Activated CD4-positive, alpha-beta T cell treated with anti-CD3 and anti-CD28 coated beads for 36 hours (primary cell): ENCODE measurements at regions of chr1 and their contacts with region 1.

Region 1: GRCh38 chr1:168225476-168226190 is at the start of gene SFT2D2:
- DNase-seq: peak; percentile 88
- ATAC-seq: peak; percentile 90
- H3K4me3 Mint-ChIP-seq: peak within 1 kb of the TSS; percentile 86
- H3K27ac Mint-ChIP-seq: peak within 1 kb of the TSS; percentile 86
- H3K4me1 Mint-ChIP-seq: peaks cover 49% of the 10 kb centered on the region
- H3K27me3 Mint-ChIP-seq: peaks cover 3% of the 10 kb centered on the region
- total RNA-seq, gene SFT2D2: 25.2 to 42.3 TPM

Region 2: DNA sequence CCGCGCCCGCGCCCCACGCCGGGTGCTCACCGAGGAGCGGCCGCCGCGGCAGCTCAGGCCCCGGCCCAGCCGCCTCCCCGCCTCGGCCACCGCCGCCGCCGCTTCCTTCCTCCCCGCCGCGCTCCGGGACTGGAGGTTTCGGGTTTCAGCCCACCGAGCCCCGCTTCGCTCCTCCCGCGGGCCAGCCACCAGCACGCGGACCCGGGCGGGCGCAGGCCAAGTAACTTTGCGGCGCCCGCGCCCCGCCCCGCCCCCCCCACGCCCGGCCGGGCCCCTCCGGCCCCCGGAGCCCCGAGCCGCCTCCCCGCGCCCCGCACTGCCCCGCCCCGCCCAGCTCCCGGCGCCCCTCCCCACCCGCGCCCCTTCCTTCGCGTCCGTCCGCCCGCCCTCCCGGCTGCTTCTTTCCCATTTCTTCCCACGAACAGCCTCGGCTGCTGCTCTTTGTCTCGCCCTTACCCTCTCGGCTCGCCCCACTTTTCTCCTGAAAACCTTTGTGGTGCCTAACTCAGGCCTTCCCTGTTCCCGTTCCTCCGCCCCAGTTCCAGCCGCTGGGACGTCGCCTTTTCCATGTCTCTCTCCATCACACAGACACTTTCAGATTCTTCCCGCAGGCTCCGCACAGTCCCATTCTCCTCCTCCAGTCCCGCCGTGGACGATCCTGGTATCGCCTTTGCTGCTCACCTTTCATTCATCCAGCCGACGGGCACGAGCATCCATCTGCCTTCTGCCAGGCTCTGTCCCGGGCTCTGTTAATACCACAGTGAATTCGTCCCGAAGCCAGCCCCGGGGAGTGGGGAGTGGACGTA is 88.7 kb before region 1 on chr1 and contains the start of gene GPR161:
- CTCF ChIA-PET with region 1: no interaction called
- POLR2A ChIA-PET with region 1: no interaction called
- intact Hi-C with region 1: loop called in 1 of 2 experiments (anchors 5 kb)
- DNase-seq: peak; percentile 40
- ATAC-seq: no peak
- H3K4me3 Mint-ChIP-seq: peak within 1 kb of the TSS; percentile 73
- H3K27ac Mint-ChIP-seq: peak within 1 kb of the TSS; percentile 61
- H3K4me1 Mint-ChIP-seq: peaks cover 40% of the 10 kb centered on the region
- H3K27me3 Mint-ChIP-seq: peaks cover 37% of the 10 kb centered on the region
- total RNA-seq, gene GPR161: 0.42 to 0.59 TPM

Region 3: GRCh38 chr1:168243636-168244212 is 18.1 kb after region 1 on chr1:
- CTCF ChIA-PET with region 1: interaction called, 7 read pairs
- POLR2A ChIA-PET with region 1: interaction called, 11 read pairs
- intact Hi-C with region 1: no loop called
- DNase-seq: no peak
- ATAC-seq: no peak
- H3K4me3 Mint-ChIP-seq: no peak overlapping the region
- H3K27ac Mint-ChIP-seq: no peak overlapping the region
- H3K4me1 Mint-ChIP-seq: peaks cover 38% of the 10 kb centered on the region
- H3K27me3 Mint-ChIP-seq: no peaks in the 10 kb centered on the region

Region 4: GRCh38 chr1:169106095-169106920 is 880.7 kb after region 1 on chr1 and contains the start of gene ATP1B1:
- CTCF ChIA-PET with region 1: no interaction called
- POLR2A ChIA-PET with region 1: no interaction called
- intact Hi-C with region 1: loop called in 1 of 2 experiments (anchors 2 kb)
- DNase-seq: peak; percentile 88
- ATAC-seq: peak; percentile 91
- H3K4me3 Mint-ChIP-seq: peak within 1 kb of the TSS; percentile 78
- H3K27ac Mint-ChIP-seq: peak within 1 kb of the TSS; percentile 63
- H3K4me1 Mint-ChIP-seq: peaks cover 41% of the 10 kb centered on the region
- H3K27me3 Mint-ChIP-seq: peaks cover 18% of the 10 kb centered on the region
- total RNA-seq, gene ATP1B1: 2.9 to 3.3 TPM